ENCODE measurements at regions of chr4 and their contacts with region 1.

Region 1: DNA sequence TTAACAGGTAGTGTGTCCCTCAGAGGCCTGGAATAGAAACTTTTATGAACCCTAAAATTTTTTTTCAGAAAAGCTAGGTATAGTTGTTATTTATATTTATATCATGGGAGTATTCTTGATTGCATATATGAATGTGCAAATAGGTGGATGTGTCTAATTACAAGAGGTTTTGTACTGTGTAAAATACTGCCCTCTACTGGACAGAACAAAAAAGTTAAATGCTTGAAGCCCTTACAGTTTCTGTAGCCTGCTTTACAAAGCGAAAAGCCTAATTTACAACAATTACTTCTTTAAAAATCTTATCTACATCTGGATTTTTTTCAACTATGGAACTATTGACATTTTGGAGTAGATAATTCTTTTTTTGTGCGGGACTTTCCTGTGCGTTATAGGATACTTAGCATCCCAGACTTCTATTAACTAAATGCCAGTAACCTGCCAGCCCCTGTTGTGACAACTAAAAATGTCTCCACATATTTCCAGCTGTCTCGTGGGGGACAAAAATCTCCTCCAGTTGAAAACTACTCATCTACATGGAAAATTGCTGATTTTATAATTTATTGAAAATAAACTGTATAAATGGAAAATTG is 35.1 kb downstream of the ENPEP start:
- DNase-seq: peak; percentile 85
- H3K4me3 ChIP-seq: no peak overlapping the region
- H3K27ac ChIP-seq: no peak overlapping the region
- H3K4me1 ChIP-seq: peaks cover 25% of the 10 kb centered on the region
- H3K27me3 ChIP-seq: no peaks in the 10 kb centered on the region
- CTCF ChIP-seq: peak; percentile 75

Region 2: GRCh38 chr4:110310795-110311194 is 200.3 kb before region 1 on chr4:
- CTCF ChIA-PET with region 1: interaction called, 5 read pairs
- POLR2A ChIA-PET with region 1: no interaction called
- intact Hi-C with region 1: loop called (anchors 2 kb)
- DNase-seq: no peak
- H3K4me3 ChIP-seq: no peak overlapping the region
- H3K27ac ChIP-seq: no peak overlapping the region
- H3K4me1 ChIP-seq: peaks cover 32% of the 10 kb centered on the region
- H3K27me3 ChIP-seq: no peaks in the 10 kb centered on the region
- CTCF ChIP-seq: no peak

Region 3: DNA sequence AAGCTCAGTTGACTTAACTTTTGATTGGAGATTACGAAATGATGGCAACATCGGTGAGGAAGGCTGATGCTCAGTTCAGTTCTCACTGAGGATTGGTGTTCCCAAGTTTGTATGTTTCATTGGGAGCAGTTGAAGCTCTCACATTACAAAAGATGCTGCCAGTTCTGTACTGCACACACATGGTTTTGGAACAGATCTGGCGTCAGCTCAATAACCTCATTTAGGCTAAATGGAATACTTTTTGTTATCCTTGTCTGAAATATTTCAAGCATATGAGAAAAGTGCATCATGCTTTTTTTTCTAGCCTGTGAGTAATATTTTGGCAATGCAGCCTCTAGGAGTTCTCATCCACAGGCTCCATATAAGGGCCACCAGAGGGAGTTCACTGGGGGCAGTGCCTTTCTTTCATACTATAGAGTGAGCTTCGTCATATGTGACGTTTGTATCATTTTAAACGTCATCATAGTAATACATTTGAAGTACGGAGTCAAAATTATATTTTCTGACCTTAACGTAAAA is 31.0 kb before region 1 on chr4:
- CTCF ChIA-PET with region 1: interaction called, 11 read pairs
- POLR2A ChIA-PET with region 1: no interaction called
- intact Hi-C with region 1: no loop called
- DNase-seq: peak; percentile 78
- H3K4me3 ChIP-seq: no peak overlapping the region
- H3K27ac ChIP-seq: peak overlapping the region; percentile 55
- H3K4me1 ChIP-seq: peaks cover 9% of the 10 kb centered on the region
- H3K27me3 ChIP-seq: no peaks in the 10 kb centered on the region
- CTCF ChIP-seq: peak; percentile 54

Region 4: GRCh38 chr4:110567214-110567613 is 56.2 kb after region 1 on chr4:
- CTCF ChIA-PET with region 1: interaction called, 13 read pairs
- POLR2A ChIA-PET with region 1: no interaction called
- intact Hi-C with region 1: no loop called
- DNase-seq: no peak
- H3K4me3 ChIP-seq: no peak overlapping the region
- H3K27ac ChIP-seq: no peak overlapping the region
- H3K4me1 ChIP-seq: no peaks in the 10 kb centered on the region
- H3K27me3 ChIP-seq: no peaks in the 10 kb centered on the region
- CTCF ChIP-seq: no peak

Region 5: DNA sequence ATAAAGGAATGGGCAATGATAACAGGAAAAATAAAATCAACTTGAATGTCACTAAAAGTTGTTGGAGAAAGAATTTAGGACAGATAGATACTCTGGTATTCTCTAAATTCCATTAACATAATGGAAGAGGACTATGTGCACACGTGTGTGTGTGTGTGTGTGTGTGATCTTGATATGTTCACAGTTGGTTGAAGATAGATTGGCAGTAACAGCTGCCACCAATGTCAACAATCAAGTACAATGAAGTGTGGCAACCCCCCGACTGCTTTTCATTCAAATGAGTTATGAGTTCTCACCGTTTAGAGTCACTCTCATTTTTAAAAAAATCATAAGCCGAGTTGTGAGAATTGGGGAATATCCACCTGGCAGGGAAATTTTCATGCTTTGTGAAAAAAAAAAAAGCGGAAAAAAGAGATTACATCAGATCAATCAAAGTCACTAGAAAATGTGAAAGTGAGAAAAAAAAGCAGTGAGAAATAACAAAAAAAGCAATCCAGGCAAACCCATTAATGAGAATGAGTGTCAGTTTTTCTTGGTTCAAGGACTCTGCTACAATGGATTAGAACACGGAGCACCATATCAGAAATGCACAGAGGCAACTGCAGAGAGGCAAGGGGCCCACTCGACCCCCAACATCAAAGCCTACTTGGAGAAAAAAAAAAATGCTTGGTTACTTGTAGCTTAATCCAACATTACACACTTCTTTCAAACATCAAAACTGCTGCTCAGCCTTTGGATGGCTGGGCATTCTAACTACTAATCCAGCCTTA is 526.7 kb after region 1 on chr4:
- CTCF ChIA-PET with region 1: no interaction called
- POLR2A ChIA-PET with region 1: no interaction called
- intact Hi-C with region 1: no loop called
- DNase-seq: no peak
- H3K4me3 ChIP-seq: no peak overlapping the region
- H3K27ac ChIP-seq: no peak overlapping the region
- H3K4me1 ChIP-seq: no peaks in the 10 kb centered on the region
- H3K27me3 ChIP-seq: no peaks in the 10 kb centered on the region
- CTCF ChIP-seq: no peak

Region 6: GRCh38 chr4:111108153-111108552 is 597.1 kb after region 1 on chr4:
- CTCF ChIA-PET with region 1: no interaction called
- POLR2A ChIA-PET with region 1: no interaction called
- intact Hi-C with region 1: no loop called
- DNase-seq: no peak
- H3K4me3 ChIP-seq: no peak overlapping the region
- H3K27ac ChIP-seq: no peak overlapping the region
- H3K4me1 ChIP-seq: peaks cover 5% of the 10 kb centered on the region
- H3K27me3 ChIP-seq: no peaks in the 10 kb centered on the region
- CTCF ChIP-seq: no peak